ENCODE measurements at regions of chr20 and their contacts with region 1.

Region 1: GRCh38 chr20:20017001-20017843 is at the start of gene NAA20:
- DNase-seq: peak; percentile 82 to 95 (median 86)
- ATAC-seq: peak; percentile 98
- H3K4me3 ChIP-seq: peak within 1 kb of the TSS; percentile 76
- H3K4me3 Mint-ChIP-seq: peak within 1 kb of the TSS; percentile 95
- H3K27ac ChIP-seq: peak within 1 kb of the TSS; percentile 32 to 47
- H3K27ac Mint-ChIP-seq: peak within 1 kb of the TSS; percentile 88
- H3K4me1 ChIP-seq: peaks cover 38% of the 10 kb centered on the region
- H3K4me1 Mint-ChIP-seq: peaks cover 54% of the 10 kb centered on the region
- H3K27me3 ChIP-seq: no peaks in the 10 kb centered on the region
- H3K27me3 Mint-ChIP-seq: no peaks in the 10 kb centered on the region
- CTCF ChIP-seq: peak; percentile 75
- total RNA-seq, gene NAA20: 18.8 to 18.9 TPM

Region 2: DNA sequence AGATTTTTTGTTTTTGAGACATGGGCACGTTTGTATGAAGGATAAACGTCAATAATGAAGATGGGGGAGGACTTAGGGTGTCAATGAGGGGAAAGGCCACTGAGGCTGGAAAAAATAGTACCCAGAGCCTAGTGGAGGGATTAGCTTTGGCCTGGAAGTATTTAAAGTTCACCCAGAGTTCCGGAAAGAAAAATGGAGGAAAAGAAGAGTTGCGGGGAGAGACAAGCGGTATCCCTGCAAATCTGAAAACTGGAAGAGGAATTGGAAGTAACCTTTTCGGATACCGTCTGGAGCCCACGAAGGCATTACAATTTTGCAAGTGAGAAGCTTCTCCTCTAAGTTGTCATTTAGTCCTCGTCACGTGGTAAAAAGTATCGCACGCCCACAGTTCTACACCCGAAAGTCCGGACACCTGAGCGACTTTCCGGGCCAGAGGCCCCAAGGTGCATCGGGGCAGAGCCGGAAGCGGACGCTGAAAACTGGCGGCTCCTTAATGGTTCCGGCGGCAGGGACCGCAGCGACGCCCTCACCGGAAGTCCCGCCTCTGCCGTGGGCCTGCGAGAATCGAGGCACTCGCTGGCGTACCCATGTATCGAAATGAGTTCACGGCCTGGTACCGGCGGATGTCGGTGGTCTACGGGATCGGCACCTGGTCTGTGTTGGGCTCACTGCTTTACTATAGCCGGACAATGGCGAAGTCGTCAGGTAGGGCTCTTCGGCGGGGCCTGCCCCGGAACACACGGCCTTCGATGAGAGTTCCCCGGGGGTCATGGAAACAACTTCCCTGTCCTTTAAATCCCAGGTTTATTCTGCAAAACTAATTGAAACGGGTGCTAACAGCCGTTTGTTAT is 1450.1 kb before region 1 on chr20 and contains the start of gene SMIM26:
- CTCF ChIA-PET with region 1: no interaction called
- POLR2A ChIA-PET with region 1: no interaction called
- intact Hi-C with region 1: loop called in 1 of 2 experiments (anchors 10 kb)
- DNase-seq: peak; percentile 90 to 97 (median 94)
- ATAC-seq: peak; percentile 99
- H3K4me3 ChIP-seq: peak within 1 kb of the TSS; percentile 91
- H3K4me3 Mint-ChIP-seq: peak within 1 kb of the TSS; percentile 99
- H3K27ac ChIP-seq: peak within 1 kb of the TSS; percentile 82 to 94
- H3K27ac Mint-ChIP-seq: peak within 1 kb of the TSS; percentile 100
- H3K4me1 ChIP-seq: peaks cover 20% of the 10 kb centered on the region
- H3K4me1 Mint-ChIP-seq: peaks cover 28% of the 10 kb centered on the region
- H3K27me3 ChIP-seq: no peaks in the 10 kb centered on the region
- H3K27me3 Mint-ChIP-seq: no peaks in the 10 kb centered on the region
- CTCF ChIP-seq: no peak
- total RNA-seq, gene SMIM26: 78.7 to 79.8 TPM

Region 3: GRCh38 chr20:20712474-20713243 is 695.4 kb after region 1 on chr20 and contains the start of gene RALGAPA2:
- CTCF ChIA-PET with region 1: no interaction called
- POLR2A ChIA-PET with region 1: no interaction called
- intact Hi-C with region 1: loop called in 1 of 2 experiments (anchors 10 kb)
- DNase-seq: peak; percentile 89 to 97 (median 94)
- ATAC-seq: peak; percentile 93
- H3K4me3 ChIP-seq: peak within 1 kb of the TSS; percentile 82
- H3K4me3 Mint-ChIP-seq: peak within 1 kb of the TSS; percentile 98
- H3K27ac ChIP-seq: peak within 1 kb of the TSS; percentile 79 to 95
- H3K27ac Mint-ChIP-seq: peak within 1 kb of the TSS; percentile 92
- H3K4me1 ChIP-seq: peaks cover 15% of the 10 kb centered on the region
- H3K4me1 Mint-ChIP-seq: peaks cover 40% of the 10 kb centered on the region
- H3K27me3 ChIP-seq: no peaks in the 10 kb centered on the region
- H3K27me3 Mint-ChIP-seq: peaks cover 5% of the 10 kb centered on the region
- CTCF ChIP-seq: no peak
- total RNA-seq, gene RALGAPA2: 21.2 to 21.9 TPM

Measured in CD4-positive, alpha-beta T cell (primary cell).